ENCODE measurements at regions of chr12 and their contacts with region 1.

Region 1: DNA sequence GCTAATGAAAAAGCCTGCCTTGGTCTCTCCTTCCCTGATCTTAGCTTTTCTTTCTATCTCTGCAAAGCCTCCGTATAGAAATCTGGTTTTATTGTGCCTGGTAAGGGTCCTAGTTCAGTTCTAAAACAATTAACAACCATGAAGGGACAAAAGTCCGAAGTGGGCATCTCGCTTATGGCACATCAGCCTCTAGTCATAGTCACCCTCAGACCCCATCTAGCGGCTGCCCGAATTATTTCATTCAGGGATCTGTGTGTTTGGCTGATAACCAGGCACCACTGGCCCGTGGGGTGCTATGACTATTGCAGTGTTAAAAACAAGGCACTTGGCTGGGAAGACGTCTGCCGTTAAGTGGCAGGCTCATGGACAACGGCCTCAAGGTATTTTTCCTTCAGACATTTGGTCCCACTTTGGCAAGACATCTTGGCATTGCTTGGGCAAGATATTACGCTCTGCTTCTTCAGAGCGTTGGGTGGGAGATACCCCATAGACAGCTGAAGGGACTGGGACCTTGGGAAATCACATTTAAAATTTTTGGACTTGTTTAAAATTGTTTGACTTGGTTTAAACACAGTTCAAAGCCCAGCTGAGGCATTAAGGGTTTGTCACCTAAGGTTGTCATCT is 87.1 kb downstream of the SINHCAF start:
- DNase-seq: peak; percentile 68 to 82 (median 77)
- H3K4me3 ChIP-seq: peak overlapping the region in 3 of 7 experiments; percentile 23 to 45 (median 26)
- H3K27ac ChIP-seq: no peak overlapping the region
- H3K4me1 ChIP-seq: no peaks in the 10 kb centered on the region
- H3K27me3 ChIP-seq: peaks cover 0 to 3% (median 0%) of the 10 kb centered on the region in 5 experiments

Region 2: DNA sequence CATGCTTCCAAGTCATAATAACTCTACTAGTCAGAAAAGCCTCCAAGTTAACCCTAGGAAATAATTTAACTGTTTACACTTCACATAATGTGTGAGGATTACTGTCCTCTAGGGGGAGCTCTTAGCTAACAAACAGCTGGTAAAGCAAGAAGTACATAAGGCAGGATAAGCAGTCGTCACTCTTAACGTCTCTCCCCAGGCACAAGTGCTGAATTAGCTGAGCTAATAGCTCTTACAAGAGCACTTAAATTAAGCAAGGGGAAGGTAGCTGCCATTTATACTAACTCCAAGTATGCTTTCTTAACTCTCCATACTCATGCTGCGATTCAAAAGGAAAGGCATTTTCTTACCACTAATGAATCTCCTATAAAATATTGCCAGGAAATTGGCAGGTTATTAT is 391.6 kb before region 1 on chr12:
- CTCF ChIA-PET with region 1: interaction called, 12 read pairs
- POLR2A ChIA-PET with region 1: no interaction called
- DNase-seq: peak; percentile 65 to 82 (median 80)
- H3K4me3 ChIP-seq: no peak overlapping the region
- H3K27ac ChIP-seq: no peak overlapping the region
- H3K4me1 ChIP-seq: peaks cover 0 to 9% (median 1%) of the 10 kb centered on the region in 4 experiments
- H3K27me3 ChIP-seq: no peaks in the 10 kb centered on the region

Region 3: GRCh38 chr12:30953951-30954751 is 284.7 kb before region 1 on chr12:
- CTCF ChIA-PET with region 1: no interaction called
- POLR2A ChIA-PET with region 1: no interaction called
- DNase-seq: no peak
- H3K4me3 ChIP-seq: no peak overlapping the region
- H3K27ac ChIP-seq: no peak overlapping the region
- H3K4me1 ChIP-seq: no peaks in the 10 kb centered on the region
- H3K27me3 ChIP-seq: no peaks in the 10 kb centered on the region

Region 4: DNA sequence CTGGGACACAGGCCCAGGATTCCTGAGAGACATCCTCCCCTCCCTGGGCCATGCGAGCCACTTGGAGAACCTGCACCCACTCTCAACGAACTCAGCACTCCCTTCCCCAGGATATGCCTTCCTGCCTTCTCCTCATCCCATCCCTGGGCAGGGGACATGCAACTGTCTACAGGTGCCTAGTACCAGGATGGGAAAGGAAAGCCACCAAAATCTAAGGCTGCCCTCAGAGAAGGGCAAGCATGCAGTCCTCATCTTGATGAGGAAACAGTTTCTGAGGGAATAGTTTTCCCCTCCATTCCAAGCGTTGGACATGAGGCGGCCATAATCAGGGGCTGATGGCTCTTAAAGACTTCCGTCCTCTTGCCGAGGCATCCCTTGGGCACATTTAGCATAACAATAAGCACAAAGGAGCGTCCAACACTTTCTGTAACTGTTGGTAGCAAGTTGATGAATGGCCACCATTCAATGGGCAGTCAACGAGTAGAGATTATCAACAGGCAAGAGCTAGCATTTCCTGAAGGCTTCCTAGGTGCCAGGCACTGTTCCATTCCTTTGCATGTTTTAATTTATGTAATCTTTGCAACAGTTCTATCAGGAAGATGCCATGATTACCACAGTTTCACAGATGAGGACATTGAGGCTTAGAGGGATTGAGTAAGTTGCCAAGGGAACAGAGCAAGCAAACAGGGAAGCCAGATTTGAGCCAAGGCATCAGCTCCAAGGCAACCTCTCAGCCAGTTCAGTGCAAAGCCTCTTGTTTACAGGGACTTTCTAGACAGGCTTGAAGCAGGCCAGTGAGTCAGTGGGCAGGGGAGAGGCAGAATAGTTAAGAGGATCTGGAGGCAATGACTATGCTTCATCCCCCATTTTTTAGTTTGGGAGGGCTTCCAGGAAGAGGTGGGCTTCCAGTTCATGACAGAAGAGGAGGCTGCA is 18.0 kb before region 1 on chr12:
- CTCF ChIA-PET with region 1: interaction called, 11 read pairs
- POLR2A ChIA-PET with region 1: no interaction called
- DNase-seq: peak in 1 of 3 donors; percentile 25
- H3K4me3 ChIP-seq: no peak overlapping the region
- H3K27ac ChIP-seq: no peak overlapping the region
- H3K4me1 ChIP-seq: peaks cover 0 to 4% (median 0%) of the 10 kb centered on the region in 4 experiments
- H3K27me3 ChIP-seq: no peaks in the 10 kb centered on the region

Region 5: DNA sequence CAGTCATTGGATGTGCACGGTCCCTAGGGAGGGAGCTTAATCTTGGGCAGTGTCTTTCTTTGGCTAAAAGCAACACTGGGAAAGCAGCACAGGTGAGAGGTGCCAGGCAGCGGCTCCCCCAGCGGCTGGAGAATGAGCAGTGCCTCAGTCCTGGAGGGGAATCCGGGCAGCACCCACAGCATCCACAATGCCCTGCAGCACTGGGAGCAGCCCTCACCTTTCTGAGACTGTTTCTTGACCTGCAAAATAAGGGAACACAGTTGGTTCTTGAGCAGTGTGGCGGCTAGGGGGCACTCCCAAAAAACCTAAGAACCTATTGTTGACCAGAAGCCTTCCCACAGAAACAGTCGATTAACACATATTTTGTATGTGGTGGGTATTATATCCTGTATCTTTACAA is 11.3 kb after region 1 on chr12:
- CTCF ChIA-PET with region 1: interaction called, 35 read pairs
- POLR2A ChIA-PET with region 1: no interaction called
- DNase-seq: no peak
- H3K4me3 ChIP-seq: no peak overlapping the region
- H3K27ac ChIP-seq: no peak overlapping the region
- H3K4me1 ChIP-seq: no peaks in the 10 kb centered on the region
- H3K27me3 ChIP-seq: peaks cover 0 to 2% (median 0%) of the 10 kb centered on the region in 5 experiments

Region 6: DNA sequence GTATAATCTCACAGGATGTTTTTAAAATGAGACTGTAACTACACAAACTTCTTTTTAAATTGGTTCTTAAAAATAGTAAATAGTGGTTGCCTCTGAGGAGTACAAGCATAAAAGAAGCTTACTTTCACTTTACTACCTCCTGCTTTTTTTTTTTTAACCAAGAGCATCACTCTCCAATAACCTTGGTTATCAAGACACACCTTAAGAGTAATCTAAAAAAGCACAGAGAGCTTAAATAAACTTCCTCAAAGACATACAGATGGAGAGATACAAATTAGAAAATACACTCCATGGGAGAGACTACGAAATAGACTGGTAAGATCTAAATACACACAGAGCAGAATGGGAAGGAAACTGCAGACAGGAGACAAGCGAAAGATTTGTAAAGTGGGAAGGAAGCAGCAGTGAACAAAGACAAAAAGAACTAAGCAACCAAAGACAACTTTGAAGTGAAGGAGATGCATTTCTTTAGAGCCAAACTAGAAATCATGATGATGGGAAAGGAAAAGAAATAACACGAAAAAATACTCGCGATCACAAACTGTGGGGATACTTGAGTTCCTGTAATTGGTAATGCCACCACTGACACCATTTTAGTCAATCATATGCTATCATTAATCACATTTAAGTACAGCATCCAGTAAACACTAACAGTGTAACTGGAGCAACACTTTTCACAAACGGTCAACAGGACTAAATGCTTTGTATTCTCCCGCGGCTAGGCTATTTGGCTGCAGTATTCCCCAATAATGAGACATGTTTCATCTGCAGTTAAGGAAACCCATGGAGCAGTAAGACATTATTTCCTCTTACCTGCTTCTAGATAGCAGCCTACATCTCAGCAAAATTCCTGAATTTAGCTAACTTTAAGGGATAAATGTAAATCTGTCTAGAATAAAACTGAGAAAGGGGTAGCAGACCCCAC is 78.9 kb after region 1 on chr12:
- CTCF ChIA-PET with region 1: no interaction called
- POLR2A ChIA-PET with region 1: no interaction called
- DNase-seq: peak in 2 of 3 donors; percentile 53 to 67
- H3K4me3 ChIP-seq: peak overlapping the region in 6 of 7 experiments; percentile 56 to 84 (median 66)
- H3K27ac ChIP-seq: peak overlapping the region; percentile 30 to 80
- H3K4me1 ChIP-seq: peaks cover 28 to 65% (median 52%) of the 10 kb centered on the region in 4 experiments
- H3K27me3 ChIP-seq: no peaks in the 10 kb centered on the region